Left lung (tissue), 14 donors: ENCODE measurements at regions of chr5 and their contacts with region 1.

Region 1: DNA sequence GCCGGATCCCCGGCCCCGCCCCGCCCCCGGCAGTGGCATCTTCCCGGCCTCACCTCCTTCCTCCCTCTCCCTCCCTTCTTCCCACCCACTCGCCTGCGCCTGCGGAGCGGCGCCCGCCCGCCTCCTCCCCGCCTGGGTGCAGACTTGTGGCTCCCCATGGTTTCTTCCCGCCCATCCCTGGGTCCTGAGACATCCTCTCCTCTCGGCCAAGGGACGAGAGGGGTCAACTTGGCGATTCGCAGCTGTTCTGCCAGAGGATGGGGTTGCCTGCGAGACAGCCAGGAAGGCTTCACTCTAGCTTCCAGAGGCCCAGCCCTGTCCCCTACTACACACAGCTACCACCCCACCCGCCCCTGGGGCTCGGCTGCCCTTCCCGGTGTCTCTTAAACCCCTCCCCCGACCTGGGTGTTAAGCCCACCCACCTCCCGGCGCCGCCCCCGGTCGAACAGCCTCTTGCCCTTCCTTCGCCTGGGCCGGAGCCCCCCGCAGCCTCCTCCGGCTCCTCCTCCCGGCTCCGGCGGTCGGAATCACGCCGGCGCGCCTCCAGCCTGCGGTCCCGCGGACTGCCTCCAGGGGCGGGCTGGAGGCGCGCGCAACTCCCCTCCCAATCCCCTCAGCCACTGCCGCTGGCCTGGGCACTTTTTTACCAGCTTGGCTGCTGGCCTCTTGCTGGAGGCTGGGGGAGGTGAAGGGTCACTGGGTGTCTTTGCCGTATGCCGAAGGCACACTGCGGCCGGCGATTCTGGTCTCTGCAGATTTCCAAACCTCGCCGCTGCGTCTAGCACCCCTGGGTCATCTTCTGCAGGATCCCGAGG is 1.9 kb downstream of the JADE2 start:
- DNase-seq: peak; percentile 84 to 96 (median 94)
- ATAC-seq: peak; percentile 74
- H3K4me3 ChIP-seq: peak overlapping the region; percentile 76 to 98
- H3K27ac ChIP-seq: peak overlapping the region; percentile 91 to 94
- H3K4me1 ChIP-seq: peaks cover 22 to 48% of the 10 kb centered on the region in 2 donors
- H3K27me3 ChIP-seq: no peaks in the 10 kb centered on the region
- CTCF ChIP-seq: peak; percentile 83 to 88

Region 2: GRCh38 chr5:134411546-134412266 is 115.6 kb before region 1 on chr5 and contains the start of gene CDKN2AIPNL:
- intact Hi-C with region 1: loop called in 1 of 2 experiments (anchors 10 kb)
- DNase-seq: peak; percentile 79 to 99 (median 93)
- ATAC-seq: peak; percentile 100
- H3K4me3 ChIP-seq: peak within 1 kb of the TSS; percentile 84 to 89
- H3K27ac ChIP-seq: peak within 1 kb of the TSS; percentile 78 to 80
- H3K4me1 ChIP-seq: peaks cover 15 to 32% of the 10 kb centered on the region in 2 donors
- H3K27me3 ChIP-seq: no peaks in the 10 kb centered on the region
- CTCF ChIP-seq: peak; percentile 72 to 80
- polyA plus RNA-seq, gene CDKN2AIPNL: 24.9 to 30.8 (median 27.7) TPM

Region 3: DNA sequence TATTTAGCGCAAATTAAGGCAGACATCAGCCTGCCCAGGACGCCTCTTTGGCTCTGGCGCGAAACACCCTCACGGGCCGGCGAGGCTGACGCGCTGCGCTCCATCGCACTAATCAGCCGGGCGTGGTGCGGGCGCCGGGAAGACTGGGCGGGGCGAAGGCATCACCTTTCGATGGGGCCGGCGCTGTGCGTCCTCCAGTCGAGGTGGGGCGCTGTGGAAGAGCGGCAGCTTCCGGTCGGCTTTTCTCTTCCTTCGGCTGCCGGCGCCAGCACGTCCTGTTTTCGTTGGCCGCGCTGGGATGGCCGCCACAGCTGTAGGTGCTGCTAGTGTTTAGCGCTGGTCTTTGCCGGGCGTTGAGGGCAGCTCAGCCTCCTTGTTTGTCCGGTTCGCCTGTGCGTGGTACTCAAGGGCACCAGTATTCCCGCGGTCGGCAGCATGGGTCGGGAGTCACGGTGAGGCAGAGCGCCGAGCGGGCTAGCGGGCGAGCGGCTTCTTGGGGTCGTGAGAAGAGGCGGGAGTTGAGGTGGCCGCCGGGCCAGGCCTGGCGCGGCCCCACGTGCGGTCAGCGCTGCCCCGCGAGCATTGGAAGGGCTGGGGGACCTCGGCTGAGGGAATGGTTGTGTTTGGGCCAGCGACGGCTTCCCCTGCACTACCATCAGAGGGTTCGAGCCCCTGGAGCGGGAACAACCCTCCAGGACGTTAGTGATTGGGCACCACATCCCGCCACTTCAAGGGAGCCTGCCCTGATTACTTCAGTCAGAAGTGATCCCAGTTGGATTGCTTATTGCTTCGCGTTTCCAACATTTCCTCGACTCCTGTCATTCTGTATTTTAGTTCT is 231.4 kb after region 1 on chr5 and contains the start of gene DDX46:
- intact Hi-C with region 1: no loop called
- DNase-seq: peak; percentile 85 to 99 (median 94)
- ATAC-seq: peak; percentile 100
- H3K4me3 ChIP-seq: peak within 1 kb of the TSS; percentile 79 to 94
- H3K27ac ChIP-seq: peak within 1 kb of the TSS; percentile 34 to 82
- H3K4me1 ChIP-seq: peaks cover 11 to 43% of the 10 kb centered on the region in 2 donors
- H3K27me3 ChIP-seq: no peaks in the 10 kb centered on the region
- CTCF ChIP-seq: peak; percentile 78 to 81
- polyA plus RNA-seq, gene DDX46: 81.8 to 105 (median 89.6) TPM